ENCODE measurements at regions of chr3 and their contacts with region 1.

Region 1: DNA sequence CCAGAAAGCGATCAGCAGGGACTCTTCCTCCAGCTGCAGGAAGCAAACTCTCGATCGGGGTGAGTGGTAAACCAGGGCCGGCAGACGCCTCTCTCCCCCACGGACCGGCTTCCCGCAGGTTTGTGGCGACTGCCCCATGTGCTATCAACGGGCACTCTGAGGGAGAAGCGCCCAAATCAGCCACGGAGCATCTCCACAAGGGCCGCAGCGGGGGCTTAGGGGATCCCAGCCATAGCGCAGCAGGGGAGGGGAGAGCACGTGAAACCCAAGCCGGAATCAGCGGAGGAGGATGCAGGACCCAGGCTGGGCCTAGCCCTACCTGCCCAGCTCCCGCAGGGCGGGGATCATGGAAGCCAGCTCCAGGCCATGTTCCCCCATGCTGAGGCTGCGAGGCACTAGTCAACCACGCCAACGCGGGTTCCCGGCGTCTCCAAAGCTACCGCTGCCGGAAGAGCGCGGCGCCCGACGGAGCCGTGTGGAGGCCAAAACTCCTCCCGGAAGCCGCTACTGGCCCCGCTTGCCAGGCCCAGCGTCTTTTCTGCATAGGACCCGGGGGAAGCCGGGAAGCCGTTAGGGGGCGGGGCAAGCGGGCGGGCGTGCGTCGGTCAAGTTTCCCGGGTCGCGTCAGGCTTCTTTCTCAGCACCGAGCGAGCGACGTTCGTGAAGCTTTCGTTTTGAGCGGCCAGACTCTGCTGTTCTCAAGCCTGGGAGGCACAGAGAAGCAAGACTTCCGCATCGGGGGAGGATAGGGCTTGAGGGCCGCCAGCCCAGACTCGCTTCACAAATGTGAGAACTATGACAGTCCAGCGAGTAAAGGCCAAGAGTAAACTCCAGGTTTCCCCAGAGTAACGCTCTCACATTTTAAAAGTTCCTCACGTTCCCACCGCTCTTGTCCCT is at the start of gene ATR:
- DNase-seq: peak; percentile 85 to 98
- H3K4me3 ChIP-seq: peak within 1 kb of the TSS; percentile 65 to 81
- H3K27ac ChIP-seq: peak within 1 kb of the TSS; percentile 91 to 94
- H3K4me1 ChIP-seq: peaks cover 0 to 10% of the 10 kb centered on the region in 2 donors
- H3K27me3 ChIP-seq: no peaks in the 10 kb centered on the region
- CTCF ChIP-seq: no peak
- total RNA-seq, gene ATR: 8.3 TPM

Region 2: DNA sequence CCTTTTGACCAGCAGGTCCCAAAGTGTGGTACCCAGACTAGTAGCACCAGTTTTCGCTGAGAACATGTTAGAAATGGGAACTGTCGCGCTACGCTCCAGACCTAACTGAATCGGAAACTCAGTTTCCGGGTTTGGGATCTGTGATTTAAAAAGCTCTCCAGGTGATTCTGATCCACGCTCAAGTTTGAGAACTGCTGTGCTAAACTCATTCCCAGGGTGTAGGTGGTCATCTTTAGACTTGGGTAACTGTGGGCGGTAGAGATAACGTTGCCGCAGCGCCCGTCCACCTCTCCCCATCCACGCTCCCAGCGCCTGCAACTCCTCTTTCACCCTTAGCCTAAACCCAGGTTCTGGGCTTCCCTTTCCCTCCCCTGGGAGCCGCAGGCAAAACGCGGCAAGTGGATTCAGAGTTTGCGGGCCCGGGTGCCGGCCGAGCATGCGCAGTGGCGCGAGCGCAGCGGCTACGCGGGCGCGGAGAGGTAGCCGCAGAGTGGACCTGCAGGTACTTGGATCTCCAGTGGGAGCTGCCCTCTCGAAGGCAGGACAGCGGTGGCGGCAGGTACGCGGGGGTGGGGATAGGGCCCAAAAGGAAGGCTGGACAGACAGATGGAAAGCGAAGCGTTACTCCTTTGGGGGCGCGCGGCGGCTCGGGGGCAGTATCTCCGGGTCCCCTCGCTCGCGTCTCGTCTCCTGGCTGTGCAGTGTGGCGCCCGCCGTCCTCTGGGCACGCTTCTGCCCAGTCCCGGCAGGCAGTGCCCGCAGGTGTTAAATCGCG is 17.6 kb after region 1 on chr3 and contains the start of gene PLS1:
- intact Hi-C with region 1: loop called (anchors 1 kb)
- DNase-seq: peak; percentile 37 to 89
- H3K4me3 ChIP-seq: peak within 1 kb of the TSS; percentile 67 to 73
- H3K27ac ChIP-seq: peak within 1 kb of the TSS; percentile 46 to 56
- H3K4me1 ChIP-seq: peaks cover 0 to 3% of the 10 kb centered on the region in 2 donors
- H3K27me3 ChIP-seq: no peaks in the 10 kb centered on the region
- CTCF ChIP-seq: no peak
- total RNA-seq, gene PLS1: 1.8 TPM

Region 3: DNA sequence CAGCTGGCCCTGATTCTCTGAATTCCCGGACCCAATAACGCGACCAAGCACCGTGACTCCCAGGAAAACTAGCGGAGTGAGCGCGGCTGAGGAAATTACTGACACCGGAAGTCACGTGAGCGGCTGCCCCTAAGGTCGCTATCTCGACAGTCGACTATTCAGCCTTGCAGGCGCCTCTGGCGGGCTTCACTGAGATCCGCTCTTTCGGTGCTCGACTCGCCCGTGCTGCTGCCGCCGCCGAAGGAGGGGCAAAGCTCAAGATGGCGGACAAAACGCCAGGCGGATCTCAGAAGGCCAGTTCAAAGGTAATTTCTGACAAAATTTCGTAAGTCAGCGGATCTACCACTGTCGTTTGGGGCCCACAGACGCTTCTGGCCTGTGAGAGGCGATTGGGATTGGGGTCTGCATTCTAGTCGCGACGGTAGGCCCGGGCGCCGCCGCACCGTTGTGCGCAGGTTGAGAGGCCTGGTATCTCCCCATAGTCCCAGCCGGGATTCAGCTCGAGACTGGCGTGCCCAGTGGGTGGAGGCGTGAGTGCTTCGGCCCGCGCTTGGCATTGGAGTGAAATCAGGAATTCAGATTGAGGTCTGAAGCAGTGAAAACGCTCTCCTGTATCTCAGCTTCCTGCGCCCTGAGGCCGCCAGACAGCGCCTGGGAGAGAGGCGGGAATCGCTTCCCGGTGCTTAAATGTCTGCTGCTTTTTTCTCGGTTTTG is 423.0 kb after region 1 on chr3 and contains the start of gene U2SURP:
- intact Hi-C with region 1: loop called (anchors 2 kb)
- DNase-seq: peak; percentile 85 to 98
- H3K4me3 ChIP-seq: peak within 1 kb of the TSS; percentile 93 to 94
- H3K27ac ChIP-seq: peak within 1 kb of the TSS; percentile 93
- H3K4me1 ChIP-seq: peaks cover 4 to 28% of the 10 kb centered on the region in 2 donors
- H3K27me3 ChIP-seq: no peaks in the 10 kb centered on the region
- CTCF ChIP-seq: peak in 1 of 3 experiments; percentile 26
- total RNA-seq, gene U2SURP: 68.6 TPM

Measured in ascending aorta (tissue), 2 donors.